ENCODE measurements at regions of chr6 and their contacts with region 1.

Region 1: DNA sequence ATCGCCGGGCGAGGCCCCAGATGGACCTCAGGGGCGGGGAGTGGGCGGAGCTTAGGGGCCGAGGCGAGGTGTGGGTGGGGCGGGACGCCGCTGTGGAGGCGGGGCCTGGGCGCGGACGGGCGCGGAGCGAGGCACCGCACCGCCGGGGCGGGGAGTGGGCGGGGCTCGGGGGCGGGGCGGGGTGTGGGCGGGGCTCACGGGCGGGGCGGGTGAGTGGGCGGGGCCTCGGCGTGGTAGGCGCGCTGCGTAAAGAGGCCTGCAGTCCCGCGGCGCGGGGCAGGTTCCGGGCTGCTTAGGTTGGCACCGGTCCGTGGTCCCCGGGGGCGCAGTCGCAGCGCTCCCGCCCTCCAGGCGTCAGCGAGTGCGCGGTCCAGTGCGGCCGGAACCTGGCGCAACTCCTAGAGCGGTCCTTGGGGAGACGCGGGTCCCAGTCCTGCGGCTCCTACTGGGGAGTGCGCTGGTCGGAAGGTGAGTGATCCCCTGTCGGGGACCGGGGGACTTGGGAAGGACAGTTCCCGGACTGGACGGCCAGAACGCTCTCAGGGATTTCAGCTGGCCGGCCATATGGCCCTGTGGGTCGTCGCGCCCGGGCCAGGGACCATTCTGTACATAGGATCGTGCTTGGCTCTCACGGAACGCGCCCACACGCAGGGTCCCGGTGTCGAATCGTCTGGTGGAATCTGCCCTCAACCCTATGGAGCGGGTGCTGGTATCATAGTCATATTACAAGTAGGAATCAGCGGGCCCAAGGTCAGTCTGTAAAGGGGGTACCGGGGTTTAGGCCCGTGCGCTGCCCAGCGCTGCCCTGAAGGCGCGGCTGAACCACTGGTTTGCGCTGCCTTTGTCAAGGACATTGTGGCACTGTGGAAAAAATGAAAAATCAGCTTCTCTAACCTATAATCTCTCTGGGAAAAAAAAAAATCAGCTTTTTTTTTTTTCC is at the start of gene NQO2:
- DNase-seq: peak; percentile 34
- H3K4me3 ChIP-seq: peak within 1 kb of the TSS; percentile 87
- H3K27ac ChIP-seq: peak within 1 kb of the TSS; percentile 47
- H3K27me3 ChIP-seq: no peaks in the 10 kb centered on the region
- CTCF ChIP-seq: no peak
- polyA plus RNA-seq, gene NQO2: 32.4 and 34.3 TPM in 2 replicates

Region 2: GRCh38 chr6:3026791-3027626 is 27.1 kb after region 1 on chr6:
- CTCF ChIA-PET with region 1: interaction called, 10 read pairs
- POLR2A ChIA-PET with region 1: interaction called, 4 read pairs
- DNase-seq: no peak
- H3K4me3 ChIP-seq: no peak overlapping the region
- H3K27ac ChIP-seq: no peak overlapping the region
- H3K27me3 ChIP-seq: peaks cover 3% of the 10 kb centered on the region
- CTCF ChIP-seq: no peak

Region 3: DNA sequence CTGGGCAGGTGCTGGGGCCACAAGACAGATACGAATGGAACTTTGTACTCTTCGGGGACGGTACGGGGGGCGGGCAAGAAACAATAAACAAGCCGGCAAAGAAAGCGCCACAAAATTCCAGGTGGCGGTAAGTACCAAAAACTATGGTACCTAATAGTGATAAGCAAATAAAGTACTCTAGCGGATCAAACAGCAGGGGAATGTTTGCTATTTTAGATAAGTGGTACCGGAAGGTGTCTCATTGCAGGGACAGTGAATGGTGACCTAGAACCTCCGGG is 53.3 kb after region 1 on chr6:
- CTCF ChIA-PET with region 1: interaction called, 5 read pairs
- POLR2A ChIA-PET with region 1: interaction called, 11 read pairs
- DNase-seq: no peak
- H3K4me3 ChIP-seq: peak overlapping the region; percentile 56
- H3K27ac ChIP-seq: no peak overlapping the region
- H3K27me3 ChIP-seq: peaks cover 17% of the 10 kb centered on the region
- CTCF ChIP-seq: no peak